ENCODE measurements at regions of chr4 and their contacts with region 1.

Region 1: GRCh38 chr4:25144870-25145481 is 15.3 kb downstream of the SEPSECS start:
- DNase-seq: no peak
- H3K4me3 ChIP-seq: no peak overlapping the region
- H3K27ac ChIP-seq: no peak overlapping the region
- H3K4me1 ChIP-seq: no peaks in the 10 kb centered on the region
- H3K27me3 ChIP-seq: no peaks in the 10 kb centered on the region
- CTCF ChIP-seq: peak; percentile 66; the same call in 1 of the 2 replicates

Region 2: DNA sequence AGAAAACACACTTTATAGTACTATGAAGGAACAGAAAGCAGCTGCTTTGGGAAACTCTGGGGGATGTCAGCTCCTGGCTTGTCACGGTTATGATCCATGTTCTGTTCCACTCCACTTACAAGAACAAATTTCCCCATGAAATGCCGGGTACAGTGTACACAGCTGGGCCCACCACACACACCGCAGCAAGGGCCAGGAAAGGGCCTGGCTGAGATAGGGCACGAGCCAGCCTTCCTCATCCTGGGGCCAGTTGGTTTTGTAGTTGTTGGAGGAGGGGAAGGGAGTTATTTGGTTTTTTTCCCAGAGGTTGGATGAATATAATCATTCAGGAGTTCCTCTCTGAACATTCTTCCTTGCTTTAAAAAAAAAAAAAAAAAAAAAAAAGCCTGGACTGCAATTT is 41.6 kb before region 1 on chr4:
- CTCF ChIA-PET with region 1: no interaction called
- POLR2A ChIA-PET with region 1: no interaction called
- intact Hi-C with region 1: loop called (anchors 1 kb)
- DNase-seq: no peak
- H3K4me3 ChIP-seq: no peak overlapping the region
- H3K27ac ChIP-seq: no peak overlapping the region
- H3K4me1 ChIP-seq: no peaks in the 10 kb centered on the region
- H3K27me3 ChIP-seq: peaks cover 9% of the 10 kb centered on the region; the same call in 1 of the 2 replicates
- CTCF ChIP-seq: no peak

Region 3: DNA sequence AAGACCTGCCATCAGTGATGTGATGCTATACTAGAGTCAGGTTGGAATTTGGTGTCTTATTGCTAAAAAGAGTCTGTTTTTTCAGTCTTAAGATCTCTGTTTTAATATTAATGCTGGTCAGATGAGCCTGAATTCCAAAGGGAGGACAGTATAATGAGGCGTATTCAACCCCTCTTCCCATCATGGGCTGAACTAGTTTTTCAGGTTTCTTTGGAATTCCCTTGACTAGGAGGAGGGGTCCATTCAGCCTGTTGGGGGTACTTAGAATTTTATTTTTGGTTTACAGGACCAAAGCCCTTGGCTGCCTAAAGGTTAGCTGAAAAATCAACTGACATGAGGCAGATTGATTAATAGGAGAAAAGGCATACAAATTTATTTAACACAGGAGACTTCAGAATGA is 64.7 kb after region 1 on chr4:
- CTCF ChIA-PET with region 1: no interaction called
- POLR2A ChIA-PET with region 1: no interaction called
- intact Hi-C with region 1: no loop called
- DNase-seq: no peak
- H3K4me3 ChIP-seq: no peak overlapping the region
- H3K27ac ChIP-seq: no peak overlapping the region
- H3K4me1 ChIP-seq: no peaks in the 10 kb centered on the region
- H3K27me3 ChIP-seq: no peaks in the 10 kb centered on the region
- CTCF ChIP-seq: no peak

Measured in PC-9 (cell line).